AG04449 (cell line): ENCODE measurements at regions of chr20 and their contacts with region 1.

Region 1: DNA sequence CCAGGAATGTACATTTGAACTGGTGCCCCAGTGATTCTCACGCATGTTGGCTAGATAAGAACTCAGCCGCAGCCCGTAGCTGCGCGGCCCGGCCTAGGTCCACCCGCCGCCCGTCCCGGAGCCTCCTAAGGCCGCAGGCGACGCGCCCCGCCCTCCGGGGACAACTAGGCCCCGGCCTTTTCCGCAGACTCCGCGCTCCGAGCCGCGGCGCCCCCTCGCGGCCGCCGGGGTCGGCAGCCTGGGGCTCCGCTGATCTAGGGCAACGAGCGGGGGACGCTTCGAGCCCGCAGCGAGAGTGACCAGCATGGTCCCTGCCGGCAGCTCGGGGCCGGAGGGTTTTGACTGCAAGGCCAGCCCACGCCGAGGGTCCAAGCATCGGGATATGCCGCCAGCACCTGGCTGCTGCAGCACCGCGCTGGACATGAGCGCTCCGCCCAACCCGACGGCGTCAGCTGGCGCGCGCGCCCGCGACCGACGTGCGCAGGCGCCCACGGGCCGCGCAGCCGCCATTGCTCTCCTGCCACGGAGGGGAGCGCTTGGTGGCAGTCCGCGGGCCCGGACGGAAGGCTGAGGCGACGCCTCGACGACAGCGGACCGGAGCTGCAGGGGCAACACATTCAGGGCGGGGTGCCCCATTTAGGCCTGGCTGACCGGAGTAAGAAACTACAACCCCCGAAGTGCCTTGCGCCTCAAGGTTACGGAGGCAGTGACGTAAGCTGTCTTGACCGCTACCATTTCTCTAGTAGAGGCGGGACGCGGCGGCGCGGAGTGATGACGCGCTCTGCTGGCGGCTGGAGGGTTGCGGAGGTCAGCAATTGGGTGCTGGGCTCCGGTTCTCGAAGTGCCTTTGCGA is at the start of gene AP5S1:
- DNase-seq: no peak
- H3K4me3 ChIP-seq: peak within 1 kb of the TSS; percentile 95
- CTCF ChIP-seq: peak; percentile 83

Region 2: DNA sequence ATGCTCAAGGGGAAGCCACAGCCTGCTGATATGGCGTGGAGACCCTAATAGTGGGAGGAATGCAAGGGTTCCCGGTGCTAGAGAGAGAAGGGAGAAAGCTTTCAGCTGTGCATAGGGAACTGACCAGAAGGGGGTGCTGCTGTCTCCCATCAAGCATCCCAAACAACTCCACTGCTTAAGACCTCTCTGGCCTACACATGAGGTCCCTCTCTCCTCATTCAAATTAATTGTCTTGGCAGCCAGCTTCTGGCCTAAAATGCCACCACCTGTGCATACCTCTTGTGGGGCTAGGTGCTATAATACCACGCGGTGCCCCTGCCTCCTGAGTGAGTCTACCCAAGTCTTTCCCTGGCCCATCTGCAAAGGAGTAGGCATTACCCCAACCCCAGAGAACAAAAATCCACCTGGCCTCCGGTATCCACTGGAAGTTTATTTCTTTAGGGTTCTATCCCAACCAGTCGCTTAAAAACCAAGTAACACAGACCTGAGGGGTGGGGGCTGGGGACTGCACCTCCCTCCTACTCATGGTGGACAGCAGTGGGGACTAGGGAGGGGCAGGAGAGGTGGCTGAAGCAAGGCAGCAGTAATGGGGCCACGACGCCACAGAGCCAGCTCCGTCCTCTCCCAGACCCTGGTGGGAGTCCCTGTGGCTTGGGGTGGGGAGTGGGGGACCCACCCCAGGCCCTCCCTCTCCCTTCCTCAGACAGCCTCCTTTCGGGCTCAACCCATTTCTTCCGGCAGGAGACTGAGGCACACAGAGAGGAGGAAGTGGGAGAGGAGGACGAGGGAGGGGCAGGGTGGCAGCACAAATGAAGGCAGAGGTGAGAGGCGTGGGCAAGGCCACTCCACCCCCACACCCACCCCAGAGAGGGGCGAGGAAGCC is 66.9 kb before region 1 on chr20:
- CTCF ChIA-PET with region 1: interaction called, 10 read pairs
- POLR2A ChIA-PET with region 1: interaction called, 4 read pairs
- DNase-seq: peak; percentile 16
- H3K4me3 ChIP-seq: no peak overlapping the region
- CTCF ChIP-seq: peak; percentile 83

Region 3: GRCh38 chr20:3767427-3768341 is 52.6 kb before region 1 on chr20 and contains the start of gene ADISSP:
- CTCF ChIA-PET with region 1: interaction called, 20 read pairs
- POLR2A ChIA-PET with region 1: no interaction called
- DNase-seq: peak; percentile 83
- H3K4me3 ChIP-seq: peak within 1 kb of the TSS; percentile 87
- CTCF ChIP-seq: peak; percentile 17

Region 4: DNA sequence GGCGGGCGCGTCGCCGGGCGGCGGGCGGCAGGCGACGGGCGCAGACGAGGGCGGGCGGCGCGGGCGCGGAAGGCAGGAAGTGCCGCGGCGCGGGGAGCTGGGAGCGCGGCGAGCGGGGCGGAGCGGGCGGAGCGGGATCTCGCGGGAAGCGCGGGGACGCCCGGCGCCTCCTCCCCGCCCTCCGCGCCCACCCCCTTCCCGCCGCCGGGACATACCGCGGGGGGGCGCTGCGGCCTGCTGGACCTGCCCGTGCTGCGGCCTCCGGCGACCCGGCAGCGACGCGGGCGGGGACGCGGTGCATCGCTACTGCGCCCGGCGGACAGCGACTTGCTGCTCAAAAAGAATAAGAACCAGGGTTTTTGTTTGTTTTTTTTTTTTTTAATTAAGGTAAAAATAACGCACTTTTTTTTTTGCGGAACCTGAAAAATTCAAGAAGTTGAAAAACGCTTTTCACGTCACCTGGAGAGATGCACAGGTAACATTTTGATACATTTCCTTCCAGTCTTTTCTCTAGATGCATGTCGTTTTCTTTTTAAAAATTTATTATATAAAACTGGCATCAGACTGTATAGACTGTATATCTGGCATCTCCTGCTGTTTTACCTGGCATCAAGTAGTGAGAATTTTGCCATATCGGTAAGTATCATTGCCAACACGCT is 33.5 kb before region 1 on chr20 and contains the start of gene CENPB:
- CTCF ChIA-PET with region 1: interaction called, 255 read pairs
- POLR2A ChIA-PET with region 1: interaction called, 12 read pairs
- DNase-seq: no peak
- H3K4me3 ChIP-seq: peak within 1 kb of the TSS; percentile 80
- CTCF ChIP-seq: peak; percentile 70

Region 5: GRCh38 chr20:3836132-3836531 is 15.9 kb after region 1 on chr20:
- CTCF ChIA-PET with region 1: interaction called, 24 read pairs
- POLR2A ChIA-PET with region 1: no interaction called
- DNase-seq: no peak
- H3K4me3 ChIP-seq: no peak overlapping the region
- CTCF ChIP-seq: no peak

Region 6: DNA sequence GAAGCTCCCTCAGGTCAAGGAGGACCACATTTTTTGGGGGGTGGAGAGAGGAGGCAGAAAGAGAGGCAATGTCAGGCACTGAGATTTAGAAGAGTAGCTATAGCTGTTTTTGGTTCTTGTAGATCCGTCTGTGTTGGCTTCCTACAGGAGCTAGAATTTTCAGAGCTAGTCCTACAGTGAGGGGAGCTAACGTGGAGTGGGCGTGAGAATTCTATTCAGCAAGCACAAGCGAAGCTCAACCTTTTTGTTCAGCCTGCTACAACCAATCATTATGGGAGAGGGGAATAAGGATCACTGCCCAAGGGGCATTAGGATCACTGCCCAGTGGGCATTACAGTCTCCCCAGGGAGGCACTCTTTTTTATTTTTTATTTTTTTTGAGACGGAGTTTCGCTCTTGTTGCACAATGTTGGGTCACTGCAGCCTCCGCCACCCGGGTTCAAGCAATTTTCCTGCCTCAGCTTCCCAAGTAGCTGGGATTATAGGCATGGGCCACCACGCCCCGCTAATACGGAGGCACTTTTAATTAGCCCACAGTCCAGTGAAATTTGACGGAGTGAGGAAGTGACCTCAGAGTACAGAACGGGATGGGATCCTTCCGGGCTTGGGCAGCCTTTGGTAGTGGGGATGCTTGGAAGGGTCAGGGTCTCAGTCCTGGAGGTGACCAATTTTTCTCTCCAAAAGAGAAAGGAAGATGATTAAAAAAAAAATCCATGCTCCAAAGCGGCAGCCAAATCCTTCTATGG is 67.8 kb after region 1 on chr20:
- CTCF ChIA-PET with region 1: interaction called, 10 read pairs
- POLR2A ChIA-PET with region 1: no interaction called
- DNase-seq: no peak
- H3K4me3 ChIP-seq: peak overlapping the region; percentile 98
- CTCF ChIP-seq: no peak